ENCODE measurements at regions of chr20 and their contacts with region 1.

Region 1: GRCh38 chr20:32357869-32358631 is at the start of gene ASXL1:
- DNase-seq: peak; percentile 96
- ATAC-seq: peak; percentile 95
- H3K4me3 Mint-ChIP-seq: peak within 1 kb of the TSS; percentile 98
- H3K27ac Mint-ChIP-seq: peak within 1 kb of the TSS; percentile 100
- H3K4me1 Mint-ChIP-seq: peaks cover 58% of the 10 kb centered on the region
- H3K27me3 Mint-ChIP-seq: no peaks in the 10 kb centered on the region
- total RNA-seq, gene ASXL1: 91.7 to 97.4 TPM

Region 2: DNA sequence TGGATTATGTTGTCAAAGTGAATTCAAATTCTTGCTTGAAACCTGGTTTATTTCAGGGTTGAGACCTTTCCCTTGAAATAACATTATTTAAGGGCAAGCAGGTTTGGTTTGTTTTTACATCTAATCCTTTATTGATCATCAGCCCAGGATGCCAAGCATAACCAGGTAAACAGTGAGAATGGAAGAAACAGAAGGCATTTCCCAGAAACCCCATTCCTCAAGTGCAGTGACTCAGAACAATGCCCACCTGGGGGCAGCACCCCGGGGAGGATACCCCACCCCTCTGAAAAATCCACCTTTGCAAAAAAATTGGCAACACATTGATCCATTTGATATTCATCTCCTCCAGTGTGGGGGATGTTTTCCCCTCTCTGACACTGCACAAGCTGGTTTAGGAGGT is 117.8 kb before region 1 on chr20:
- CTCF ChIA-PET with region 1: no interaction called
- POLR2A ChIA-PET with region 1: no interaction called
- DNase-seq: no peak
- ATAC-seq: no peak
- H3K4me3 Mint-ChIP-seq: no peak overlapping the region
- H3K27ac Mint-ChIP-seq: no peak overlapping the region
- H3K4me1 Mint-ChIP-seq: peaks cover 3% of the 10 kb centered on the region
- H3K27me3 Mint-ChIP-seq: no peaks in the 10 kb centered on the region

Region 3: DNA sequence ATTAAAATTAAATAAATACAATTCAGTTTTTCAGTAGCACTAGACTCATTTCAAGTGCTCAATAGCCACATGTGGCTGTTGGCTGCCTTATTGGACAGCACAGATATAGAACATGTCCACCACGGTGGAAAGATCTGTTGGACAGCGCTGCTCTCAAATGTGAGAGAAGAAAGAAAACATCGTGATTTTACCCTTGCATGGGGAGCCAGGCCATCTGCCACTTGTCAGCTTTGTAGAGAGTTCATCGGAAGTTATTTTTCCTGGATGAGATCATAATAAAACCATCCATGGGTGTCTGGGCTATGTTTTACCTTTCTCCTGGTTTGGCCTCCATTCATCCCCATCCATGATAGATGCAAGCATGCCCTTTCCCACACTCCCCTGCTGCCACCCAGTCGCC is 86.4 kb before region 1 on chr20:
- CTCF ChIA-PET with region 1: no interaction called
- POLR2A ChIA-PET with region 1: no interaction called
- DNase-seq: no peak
- ATAC-seq: no peak
- H3K4me3 Mint-ChIP-seq: no peak overlapping the region
- H3K27ac Mint-ChIP-seq: no peak overlapping the region
- H3K4me1 Mint-ChIP-seq: peaks cover 8% of the 10 kb centered on the region
- H3K27me3 Mint-ChIP-seq: no peaks in the 10 kb centered on the region

Region 4: GRCh38 chr20:32368323-32368722 is 10.3 kb after region 1 on chr20:
- CTCF ChIA-PET with region 1: no interaction called
- POLR2A ChIA-PET with region 1: interaction called, 11 read pairs
- DNase-seq: no peak
- ATAC-seq: no peak
- H3K4me3 Mint-ChIP-seq: no peak overlapping the region
- H3K27ac Mint-ChIP-seq: no peak overlapping the region
- H3K4me1 Mint-ChIP-seq: peaks cover 46% of the 10 kb centered on the region
- H3K27me3 Mint-ChIP-seq: no peaks in the 10 kb centered on the region

Region 5: DNA sequence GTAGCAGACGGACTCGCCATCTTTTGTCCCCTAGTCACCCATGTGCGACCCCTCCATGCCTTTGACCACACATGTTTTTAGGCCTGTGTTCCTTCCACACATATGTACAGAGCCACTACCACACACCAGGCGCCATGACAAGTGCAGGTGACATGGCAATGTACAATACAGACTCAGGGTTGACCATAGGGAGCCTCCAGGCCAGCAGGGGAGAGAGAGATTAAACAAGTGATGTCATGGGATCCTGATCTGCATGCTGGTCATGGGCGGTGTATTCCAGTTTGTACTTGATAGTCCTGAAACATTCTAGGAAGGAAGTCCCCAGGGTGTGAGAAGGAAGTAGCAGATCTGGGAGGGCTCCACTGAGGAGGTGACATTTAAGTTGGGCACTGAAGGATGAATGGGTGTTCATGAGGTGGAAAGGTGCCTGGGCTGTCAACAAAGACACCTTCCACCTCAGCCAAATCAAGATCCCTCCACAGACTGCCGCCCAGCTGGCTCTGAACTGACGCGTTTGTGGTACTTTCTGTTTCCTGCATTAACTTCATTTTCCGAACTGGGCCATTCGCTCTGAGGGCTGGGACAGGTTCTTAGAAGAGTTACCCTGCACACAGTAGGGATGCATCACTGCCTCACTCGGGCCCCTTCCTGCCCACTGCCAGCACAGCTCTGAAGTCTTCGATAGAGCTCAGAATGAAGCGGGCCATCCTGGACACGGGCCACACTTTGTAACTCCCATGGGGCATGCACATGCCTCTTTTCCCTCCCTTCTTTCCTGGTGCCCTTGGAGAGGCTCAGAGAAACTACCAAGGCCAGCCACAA is 133.1 kb after region 1 on chr20:
- CTCF ChIA-PET with region 1: no interaction called
- POLR2A ChIA-PET with region 1: no interaction called
- DNase-seq: no peak
- ATAC-seq: no peak
- H3K4me3 Mint-ChIP-seq: no peak overlapping the region
- H3K27ac Mint-ChIP-seq: no peak overlapping the region
- H3K4me1 Mint-ChIP-seq: peaks cover 9% of the 10 kb centered on the region
- H3K27me3 Mint-ChIP-seq: no peaks in the 10 kb centered on the region

Region 6: DNA sequence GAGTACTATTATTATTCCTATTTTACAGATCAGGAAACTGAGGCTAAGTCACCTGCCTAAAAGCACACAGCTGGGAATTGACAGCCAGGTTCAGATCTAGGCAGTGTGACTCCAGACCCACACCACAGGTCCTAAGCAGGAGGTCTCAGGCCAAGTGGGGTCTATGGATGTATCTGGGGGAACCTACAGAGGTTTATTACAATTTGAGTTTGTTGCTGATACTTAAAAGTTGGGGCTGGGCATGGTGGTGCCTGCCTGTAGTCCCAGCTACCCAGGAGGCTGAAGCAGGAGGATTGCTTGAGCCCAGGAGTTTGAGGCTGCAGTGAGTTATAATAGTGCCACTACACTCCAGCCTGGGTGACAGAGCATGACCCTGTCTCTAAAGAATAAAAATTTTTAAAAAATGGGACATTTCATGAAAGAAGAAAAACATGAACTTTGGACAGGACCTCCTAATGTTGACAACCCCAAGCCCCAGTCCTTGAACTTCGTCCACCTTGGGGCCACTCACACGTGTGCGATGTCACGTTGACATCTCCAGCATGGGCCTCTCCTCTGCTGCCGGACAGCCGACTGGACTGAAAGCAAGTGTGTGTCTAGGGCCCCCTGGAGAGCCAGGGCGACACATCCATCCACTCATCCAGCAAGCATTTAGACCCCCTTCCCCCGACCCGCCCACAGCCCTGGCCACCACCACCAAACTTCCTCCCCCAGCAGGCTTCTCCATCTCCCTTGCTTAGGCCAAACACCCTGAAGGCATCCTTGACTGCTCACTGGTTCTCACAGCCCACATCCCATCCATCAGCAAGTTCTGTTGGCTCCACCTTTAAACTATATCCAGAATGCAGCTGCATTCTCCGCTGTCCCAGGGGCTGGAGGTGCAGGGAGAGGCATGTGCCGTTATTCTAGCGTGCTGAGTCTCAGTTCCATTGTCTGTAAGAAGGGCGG is 187.1 kb after region 1 on chr20:
- CTCF ChIA-PET with region 1: no interaction called
- POLR2A ChIA-PET with region 1: no interaction called
- DNase-seq: no peak
- ATAC-seq: no peak
- H3K4me3 Mint-ChIP-seq: no peak overlapping the region
- H3K27ac Mint-ChIP-seq: peak overlapping the region; percentile 69
- H3K4me1 Mint-ChIP-seq: peaks cover 61% of the 10 kb centered on the region
- H3K27me3 Mint-ChIP-seq: no peaks in the 10 kb centered on the region

Measured in activated CD8-positive, alpha-beta T cell treated with anti-CD3 and anti-CD28 coated beads, Interleukin-2, amount 10 ng/mL, durations not matched to agents 7 days and 5 days (primary cell).